Endothelial cell of umbilical vein (primary cell): ENCODE measurements at regions of chr1 and their contacts with region 1.

Region 1: DNA sequence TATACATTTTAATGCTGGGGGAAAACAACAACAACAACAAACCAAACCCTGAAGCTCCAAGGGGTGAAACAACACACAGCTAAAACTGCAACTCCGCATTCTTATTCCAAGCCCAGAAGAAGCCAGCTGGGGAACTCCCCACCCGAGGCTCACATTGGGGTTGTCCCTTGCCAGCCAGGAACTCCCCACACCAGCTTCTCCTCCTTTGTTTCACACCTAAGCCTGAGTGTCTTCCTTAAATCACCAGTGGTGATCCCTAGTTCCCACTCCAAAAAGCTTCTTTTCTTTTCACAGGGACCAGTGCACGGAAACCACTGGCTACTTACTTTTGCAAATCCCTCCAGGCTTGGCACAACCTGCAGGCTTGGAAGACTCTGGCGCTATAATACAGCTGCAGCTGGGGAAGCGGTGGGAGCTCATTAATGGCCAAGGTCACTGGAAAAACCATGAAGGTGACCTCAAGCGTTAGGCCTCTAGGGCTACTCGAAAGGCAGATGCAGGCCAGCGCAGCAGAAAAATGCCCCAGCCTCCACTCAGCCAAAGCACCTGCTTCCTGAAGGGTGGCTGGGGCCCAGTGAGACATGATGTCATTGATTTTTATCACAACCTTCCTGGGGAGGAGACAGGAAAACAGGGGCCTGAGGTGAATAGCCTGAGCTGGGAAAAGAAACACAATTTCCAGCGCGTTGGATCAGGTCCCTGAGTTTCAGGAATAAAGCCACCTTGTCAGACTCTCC is 40.1 kb downstream of the TLR5 start:
- DNase-seq: peak; percentile 98
- H3K4me3 ChIP-seq: peak overlapping the region in 1 of 3 experiments; percentile 9
- H3K27ac ChIP-seq: peak overlapping the region; percentile 75
- H3K4me1 ChIP-seq: peaks cover 26% of the 10 kb centered on the region
- H3K27me3 ChIP-seq: peaks cover 0 to 3% of the 10 kb centered on the region in 2 experiments
- CTCF ChIP-seq: no peak
- POLR2A ChIP-seq: no peak

Region 2: DNA sequence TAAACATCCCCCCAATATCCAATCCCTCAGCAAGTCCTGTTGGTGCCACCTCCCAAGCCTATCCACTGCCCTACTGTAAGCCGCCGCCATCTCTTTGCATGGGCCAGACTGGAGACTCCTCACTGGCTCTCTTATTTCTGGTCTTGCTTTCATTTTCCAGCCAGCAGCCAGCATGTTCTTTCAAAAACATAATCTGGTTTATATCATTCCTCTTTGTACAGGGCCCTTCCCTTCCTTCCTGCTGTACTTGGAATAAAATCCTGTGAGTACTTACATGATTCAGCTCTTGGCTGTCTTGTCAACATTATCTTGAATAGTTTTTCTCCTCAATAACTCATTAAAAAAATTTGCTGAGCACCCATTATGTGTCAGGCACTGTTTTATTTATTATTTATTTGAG is 11.9 kb after region 1 on chr1:
- CTCF ChIA-PET with region 1: interaction called, 13 read pairs
- POLR2A ChIA-PET with region 1: interaction called, 3 read pairs
- dilution Hi-C with region 1: no loop called
- intact Hi-C with region 1: no loop called
- DNase-seq: peak; percentile 81
- H3K4me3 ChIP-seq: no peak overlapping the region
- H3K27ac ChIP-seq: peak overlapping the region; percentile 32
- H3K4me1 ChIP-seq: peaks cover 14% of the 10 kb centered on the region
- H3K27me3 ChIP-seq: no peaks in the 10 kb centered on the region
- CTCF ChIP-seq: no peak
- POLR2A ChIP-seq: peak; percentile 30